HepG2 (cell line): ENCODE measurements at regions of chr6 and their contacts with region 1.

Region 1: GRCh38 chr6:19052219-19052618 is 665.1 kb downstream of the RNF144B start:
- DNase-seq: no peak
- ATAC-seq: no peak
- H3K4me3 ChIP-seq: no peak overlapping the region
- H3K27ac ChIP-seq: no peak overlapping the region
- H3K4me1 ChIP-seq: no peaks in the 10 kb centered on the region
- H3K27me3 ChIP-seq: no peaks in the 10 kb centered on the region
- CTCF ChIP-seq: no peak
- EP300 ChIP-seq: no peak
- POLR2A ChIP-seq: no peak
- RAD21 ChIP-seq: no peak

Region 2: DNA sequence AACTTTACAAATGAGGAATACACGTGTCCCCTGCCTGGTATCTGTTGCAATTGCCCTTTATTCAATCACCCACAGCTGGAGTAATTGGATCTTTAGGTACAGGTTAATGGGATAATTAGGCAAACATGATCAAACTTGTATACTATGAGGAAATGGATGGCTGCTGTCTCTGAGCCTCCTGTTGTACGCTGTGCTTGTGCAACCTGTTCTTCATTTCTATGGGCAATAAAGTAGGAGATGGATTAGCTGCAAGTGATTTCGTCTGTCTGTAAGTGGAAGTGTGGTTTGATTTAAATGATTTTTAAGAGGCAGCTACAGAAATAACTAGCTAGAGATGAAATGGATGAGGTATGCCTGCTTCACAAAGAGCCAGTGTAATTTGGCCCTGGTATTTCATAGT is 191.0 kb before region 1 on chr6:
- CTCF ChIA-PET with region 1: no interaction called
- POLR2A ChIA-PET with region 1: no interaction called
- in situ Hi-C with region 1: no loop called
- intact Hi-C with region 1: no loop called
- DNase-seq: no peak
- ATAC-seq: no peak
- H3K4me3 ChIP-seq: no peak overlapping the region
- H3K27ac ChIP-seq: no peak overlapping the region
- H3K4me1 ChIP-seq: no peaks in the 10 kb centered on the region
- H3K27me3 ChIP-seq: no peaks in the 10 kb centered on the region
- CTCF ChIP-seq: no peak
- EP300 ChIP-seq: no peak
- POLR2A ChIP-seq: no peak
- RAD21 ChIP-seq: no peak

Region 3: GRCh38 chr6:19035461-19036195 is 16.6 kb before region 1 on chr6:
- CTCF ChIA-PET with region 1: no interaction called
- POLR2A ChIA-PET with region 1: no interaction called
- in situ Hi-C with region 1: no loop called
- intact Hi-C with region 1: loop called (anchors 1 kb)
- DNase-seq: no peak
- ATAC-seq: no peak
- H3K4me3 ChIP-seq: no peak overlapping the region
- H3K27ac ChIP-seq: no peak overlapping the region
- H3K4me1 ChIP-seq: no peaks in the 10 kb centered on the region
- H3K27me3 ChIP-seq: no peaks in the 10 kb centered on the region
- CTCF ChIP-seq: no peak
- EP300 ChIP-seq: no peak
- POLR2A ChIP-seq: no peak
- RAD21 ChIP-seq: no peak